Heart right ventricle (tissue), 16 donors: ENCODE measurements at regions of chr13 and their contacts with region 1.

Region 1: GRCh38 chr13:31409678-31410356 is 210.0 kb downstream of the B3GLCT start:
- DNase-seq: no peak
- ATAC-seq: no peak
- H3K4me3 ChIP-seq: no peak overlapping the region
- H3K27ac ChIP-seq: no peak overlapping the region
- H3K4me1 ChIP-seq: no peaks in the 10 kb centered on the region
- H3K27me3 ChIP-seq: peaks cover 0 to 8% (median 0%) of the 10 kb centered on the region in 7 donors
- CTCF ChIP-seq: peak in 3 of 9 donors; percentile 7 to 9 (median 8)

Region 2: GRCh38 chr13:31310786-31311185 is 99.0 kb before region 1 on chr13:
- intact Hi-C with region 1: loop called in 1 of 10 experiments (anchors 10 kb)
- DNase-seq: peak; percentile 53 to 61
- ATAC-seq: peak; percentile 87 to 98 (median 96)
- H3K4me3 ChIP-seq: no peak overlapping the region
- H3K27ac ChIP-seq: peak overlapping the region in 8 of 10 donors; percentile 24 to 82 (median 74)
- H3K4me1 ChIP-seq: peaks cover 0 to 16% (median 7%) of the 10 kb centered on the region in 9 donors
- H3K27me3 ChIP-seq: no peaks in the 10 kb centered on the region
- CTCF ChIP-seq: no peak

Region 3: DNA sequence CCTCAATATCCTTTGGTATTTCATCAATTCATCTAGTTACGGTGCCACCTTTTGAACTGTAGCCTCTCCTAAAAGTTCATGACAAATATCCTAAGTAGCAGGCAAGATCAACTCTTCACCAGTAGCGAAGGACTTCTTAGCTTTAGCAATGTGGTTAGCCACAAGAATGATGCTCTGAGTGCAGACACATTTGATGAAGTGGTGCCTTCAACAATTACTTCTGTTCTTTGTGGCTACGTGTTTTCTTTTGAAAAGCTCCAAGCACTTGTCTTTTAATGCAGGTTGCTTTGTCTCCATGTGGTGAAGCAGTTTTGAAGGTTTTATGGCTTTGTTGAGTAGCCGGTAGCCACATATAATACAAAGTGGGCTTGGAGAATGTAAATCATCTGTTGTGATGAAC is 15.3 kb before region 1 on chr13:
- intact Hi-C with region 1: loop called in 1 of 10 experiments (anchors 1 kb)
- DNase-seq: no peak
- ATAC-seq: no peak
- H3K4me3 ChIP-seq: no peak overlapping the region
- H3K27ac ChIP-seq: no peak overlapping the region
- H3K4me1 ChIP-seq: no peaks in the 10 kb centered on the region
- H3K27me3 ChIP-seq: no peaks in the 10 kb centered on the region
- CTCF ChIP-seq: no peak

Region 4: GRCh38 chr13:31843044-31843443 is 433.2 kb after region 1 on chr13:
- intact Hi-C with region 1: no loop called
- DNase-seq: no peak
- ATAC-seq: no peak
- H3K4me3 ChIP-seq: no peak overlapping the region
- H3K27ac ChIP-seq: no peak overlapping the region
- H3K4me1 ChIP-seq: peaks cover 0 to 21% (median 14%) of the 10 kb centered on the region in 9 donors
- H3K27me3 ChIP-seq: peaks cover 0 to 6% (median 0%) of the 10 kb centered on the region in 7 donors
- CTCF ChIP-seq: no peak